Activated CD4-positive, alpha-beta T cell treated with anti-CD3 and anti-CD28 coated beads, Interleukin-2, amount 10 ng/mL, durations not matched to agents 24 days and 14 days (primary cell): ENCODE measurements at regions of chr6 and their contacts with region 1.

Region 1: DNA sequence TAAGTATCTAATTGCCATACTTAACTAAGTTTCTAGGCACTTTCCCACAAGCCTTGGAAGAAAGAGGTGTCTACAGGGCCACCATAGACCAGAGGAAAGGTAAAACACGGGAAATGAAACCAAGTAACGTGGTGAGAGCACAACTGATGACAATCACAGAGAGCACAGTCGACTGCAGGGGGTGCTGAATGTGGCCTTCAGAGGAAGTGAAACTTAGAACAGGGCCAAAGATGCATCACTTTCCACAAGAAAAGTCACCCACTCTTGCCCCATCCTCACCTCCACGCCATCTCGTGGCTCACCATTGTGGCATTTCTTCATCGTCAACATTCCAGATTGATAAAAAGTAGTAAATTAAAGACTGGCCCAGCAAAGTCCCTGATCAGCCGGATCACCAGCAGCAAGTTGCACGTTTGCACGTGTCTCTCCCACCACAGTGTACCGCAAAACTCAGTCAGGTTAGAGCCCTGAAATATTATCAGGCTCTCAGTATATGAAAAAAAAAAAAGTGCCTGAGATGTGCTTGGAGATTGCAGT is 31.4 kb downstream of the HIVEP2 start:
- DNase-seq: peak; percentile 92
- H3K4me3 Mint-ChIP-seq: peak overlapping the region; percentile 82
- H3K27ac Mint-ChIP-seq: peak overlapping the region; percentile 94
- H3K4me1 Mint-ChIP-seq: peaks cover 62% of the 10 kb centered on the region
- H3K27me3 Mint-ChIP-seq: no peaks in the 10 kb centered on the region

Region 2: GRCh38 chr6:142692942-142693341 is 220.6 kb before region 1 on chr6:
- intact Hi-C with region 1: loop called (anchors 1 kb)
- DNase-seq: peak; percentile 88
- H3K4me3 Mint-ChIP-seq: no peak overlapping the region
- H3K27ac Mint-ChIP-seq: peak overlapping the region; percentile 2
- H3K4me1 Mint-ChIP-seq: peaks cover 15% of the 10 kb centered on the region
- H3K27me3 Mint-ChIP-seq: no peaks in the 10 kb centered on the region

Region 3: DNA sequence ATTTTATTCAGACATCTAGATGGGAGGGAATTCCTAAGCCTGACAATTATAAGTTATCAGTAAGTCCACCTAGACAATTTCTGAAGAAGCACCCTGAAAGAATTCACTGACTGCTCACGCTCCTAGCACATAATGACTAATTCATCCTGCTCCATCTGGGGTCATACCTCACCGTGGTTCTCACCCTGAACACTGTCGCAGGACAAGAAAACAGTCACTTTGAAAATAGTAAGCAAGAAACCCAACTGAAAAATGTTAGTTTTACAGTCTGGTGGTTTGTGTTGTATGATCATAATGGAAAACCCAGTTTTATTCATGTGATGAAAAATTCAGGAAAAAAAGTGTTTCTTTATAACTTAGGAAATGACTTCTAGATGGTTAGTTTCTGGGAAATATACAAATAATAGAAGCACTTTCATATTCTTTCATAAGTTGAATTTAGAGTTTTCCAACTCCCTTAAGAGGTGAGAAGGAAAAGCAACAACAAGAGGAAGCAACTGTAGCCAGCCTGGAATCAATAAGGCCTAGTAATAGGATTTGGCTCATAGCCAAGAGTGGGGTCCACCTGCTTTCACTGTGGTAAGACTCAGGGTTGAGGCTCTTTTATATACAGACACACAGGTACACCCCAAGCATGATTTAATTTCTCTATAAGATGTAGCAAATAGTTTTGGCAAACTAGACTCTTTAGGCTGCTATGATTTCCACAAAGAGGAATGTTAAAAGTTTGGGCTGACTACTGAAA is 62.7 kb before region 1 on chr6:
- intact Hi-C with region 1: loop called (anchors 1 kb)
- DNase-seq: peak; percentile 74
- H3K4me3 Mint-ChIP-seq: peak overlapping the region; percentile 70
- H3K27ac Mint-ChIP-seq: peak overlapping the region; percentile 87
- H3K4me1 Mint-ChIP-seq: peaks cover 83% of the 10 kb centered on the region
- H3K27me3 Mint-ChIP-seq: no peaks in the 10 kb centered on the region

Region 4: DNA sequence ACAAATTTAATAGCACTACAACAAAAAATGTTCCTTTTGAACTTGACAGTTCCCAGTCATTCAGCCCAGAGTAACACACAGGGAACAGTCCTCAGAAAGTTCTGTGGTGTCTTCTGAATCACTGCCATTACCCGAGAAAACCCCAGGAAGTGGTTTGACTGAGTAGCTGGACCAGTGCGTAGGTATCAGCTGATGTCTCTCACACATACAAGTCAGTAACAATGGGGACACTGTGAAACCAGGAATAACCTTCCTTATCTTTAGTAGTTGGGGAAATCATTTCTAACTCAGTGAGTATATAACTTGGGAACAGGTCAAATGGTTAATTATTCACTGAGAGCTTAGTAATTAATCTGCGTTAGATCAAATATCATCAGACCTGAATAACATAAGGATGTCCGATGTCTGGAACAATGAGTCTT is 41.7 kb before region 1 on chr6:
- intact Hi-C with region 1: loop called (anchors 5 kb)
- DNase-seq: peak; percentile 87
- H3K4me3 Mint-ChIP-seq: peak overlapping the region; percentile 78
- H3K27ac Mint-ChIP-seq: peak overlapping the region; percentile 66
- H3K4me1 Mint-ChIP-seq: peaks cover 77% of the 10 kb centered on the region
- H3K27me3 Mint-ChIP-seq: no peaks in the 10 kb centered on the region

Region 5: DNA sequence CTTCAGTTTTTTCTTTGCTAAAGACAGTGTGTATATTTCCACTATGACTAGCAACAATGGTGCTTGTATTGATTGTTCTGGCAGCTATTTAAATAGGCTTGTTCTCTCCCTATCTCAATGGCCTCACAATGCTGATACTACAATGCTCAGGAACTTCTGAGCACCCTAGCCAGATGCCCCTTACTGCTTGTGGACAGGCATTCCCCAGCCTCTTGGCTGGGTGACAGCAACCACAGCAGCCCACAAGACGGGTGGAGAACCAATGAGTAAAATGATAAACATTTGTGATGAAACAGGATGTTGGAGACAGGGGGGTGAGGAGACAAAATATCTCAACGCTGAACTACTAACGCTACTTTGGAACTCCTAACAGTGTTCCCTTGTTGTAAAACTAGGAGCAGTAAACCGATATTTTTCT is 10.9 kb before region 1 on chr6:
- intact Hi-C with region 1: loop called (anchors 1 kb)
- DNase-seq: peak; percentile 93
- H3K4me3 Mint-ChIP-seq: peak overlapping the region; percentile 78
- H3K27ac Mint-ChIP-seq: peak overlapping the region; percentile 98
- H3K4me1 Mint-ChIP-seq: peaks cover 63% of the 10 kb centered on the region
- H3K27me3 Mint-ChIP-seq: no peaks in the 10 kb centered on the region